ENCODE measurements at regions of chr13 and their contacts with region 1.

Region 1: GRCh38 chr13:113969973-113970611 is 3.8 kb downstream of the C13orf46 start:
- DNase-seq: no peak
- ATAC-seq: no peak
- H3K4me3 ChIP-seq: no peak overlapping the region
- H3K4me3 Mint-ChIP-seq: no peak overlapping the region
- H3K27ac ChIP-seq: no peak overlapping the region
- H3K27ac Mint-ChIP-seq: no peak overlapping the region
- H3K4me1 ChIP-seq: no peaks in the 10 kb centered on the region
- H3K4me1 Mint-ChIP-seq: no peaks in the 10 kb centered on the region
- H3K27me3 ChIP-seq: no peaks in the 10 kb centered on the region
- H3K27me3 Mint-ChIP-seq: no peaks in the 10 kb centered on the region
- CTCF ChIP-seq: no peak

Region 2: GRCh38 chr13:113208424-113209335 is 761.4 kb before region 1 on chr13 and contains the start of gene PCID2:
- CTCF ChIA-PET with region 1: no interaction called
- POLR2A ChIA-PET with region 1: no interaction called
- intact Hi-C with region 1: no loop called
- DNase-seq: peak; percentile 84 to 96 (median 90)
- ATAC-seq: peak; percentile 64
- H3K4me3 ChIP-seq: peak within 1 kb of the TSS; percentile 71
- H3K4me3 Mint-ChIP-seq: peak within 1 kb of the TSS; percentile 95
- H3K27ac ChIP-seq: peak within 1 kb of the TSS; percentile 90 to 93
- H3K27ac Mint-ChIP-seq: peak within 1 kb of the TSS; percentile 88
- H3K4me1 ChIP-seq: peaks cover 65% of the 10 kb centered on the region
- H3K4me1 Mint-ChIP-seq: peaks cover 64% of the 10 kb centered on the region
- H3K27me3 ChIP-seq: no peaks in the 10 kb centered on the region
- H3K27me3 Mint-ChIP-seq: no peaks in the 10 kb centered on the region
- CTCF ChIP-seq: no peak
- total RNA-seq, gene PCID2: 33.6 to 33.7 TPM

Region 3: GRCh38 chr13:113816946-113817859 is 152.9 kb before region 1 on chr13:
- CTCF ChIA-PET with region 1: no interaction called
- POLR2A ChIA-PET with region 1: no interaction called
- intact Hi-C with region 1: no loop called
- DNase-seq: peak; percentile 77 to 93 (median 86)
- ATAC-seq: peak; percentile 94
- H3K4me3 ChIP-seq: no peak overlapping the region
- H3K4me3 Mint-ChIP-seq: peak overlapping the region; percentile 87
- H3K27ac ChIP-seq: no peak overlapping the region
- H3K27ac Mint-ChIP-seq: peak overlapping the region; percentile 61
- H3K4me1 ChIP-seq: peaks cover 17% of the 10 kb centered on the region
- H3K4me1 Mint-ChIP-seq: peaks cover 23% of the 10 kb centered on the region
- H3K27me3 ChIP-seq: no peaks in the 10 kb centered on the region
- H3K27me3 Mint-ChIP-seq: no peaks in the 10 kb centered on the region
- CTCF ChIP-seq: peak; percentile 77

Region 4: DNA sequence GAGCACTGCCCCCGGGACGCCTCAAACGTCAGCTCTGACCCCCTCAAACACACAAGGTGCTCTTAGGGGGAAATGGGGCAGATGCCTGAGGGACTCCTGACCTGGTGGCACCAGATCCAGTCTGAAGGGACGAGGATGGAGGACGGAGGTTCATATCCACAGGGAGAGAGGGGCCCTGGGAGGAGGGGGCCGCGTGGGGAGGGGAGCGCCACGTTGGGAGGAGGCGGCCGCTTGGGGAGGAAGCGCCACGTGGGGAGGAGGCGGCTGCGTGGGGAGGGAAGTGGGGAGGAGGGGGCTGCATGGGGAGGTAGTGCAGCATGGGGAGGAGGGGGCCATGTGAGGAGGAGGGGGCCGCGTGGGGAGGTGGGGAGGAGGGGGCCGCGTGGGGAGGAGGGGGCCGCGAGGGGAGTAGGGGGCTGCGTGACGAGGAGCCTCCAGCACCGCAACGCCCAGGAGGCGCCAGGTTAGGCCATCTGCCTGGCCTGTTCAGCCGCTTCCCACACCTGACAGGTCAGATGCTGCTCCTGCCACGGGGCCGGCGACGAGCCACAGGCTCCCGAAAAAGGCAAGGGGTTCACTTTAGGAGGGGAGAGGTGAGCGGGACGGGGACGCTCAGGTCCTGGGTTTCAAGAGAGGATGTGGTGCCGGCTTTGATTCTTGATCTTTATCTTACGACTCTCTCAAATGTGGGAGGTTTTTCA is 40.5 kb after region 1 on chr13:
- CTCF ChIA-PET with region 1: no interaction called
- POLR2A ChIA-PET with region 1: interaction called, 3 read pairs
- intact Hi-C with region 1: loop called in 1 of 2 experiments (anchors 5 kb)
- DNase-seq: peak in 3 of 14 experiments; percentile 39 to 45 (median 39)
- ATAC-seq: peak; percentile 76
- H3K4me3 ChIP-seq: no peak overlapping the region
- H3K4me3 Mint-ChIP-seq: peak overlapping the region; percentile 5
- H3K27ac ChIP-seq: peak overlapping the region in 1 of 2 donors; percentile 0
- H3K27ac Mint-ChIP-seq: peak overlapping the region; percentile 69
- H3K4me1 ChIP-seq: peaks cover 7% of the 10 kb centered on the region
- H3K4me1 Mint-ChIP-seq: peaks cover 6% of the 10 kb centered on the region
- H3K27me3 ChIP-seq: no peaks in the 10 kb centered on the region
- H3K27me3 Mint-ChIP-seq: no peaks in the 10 kb centered on the region
- CTCF ChIP-seq: no peak

Region 5: DNA sequence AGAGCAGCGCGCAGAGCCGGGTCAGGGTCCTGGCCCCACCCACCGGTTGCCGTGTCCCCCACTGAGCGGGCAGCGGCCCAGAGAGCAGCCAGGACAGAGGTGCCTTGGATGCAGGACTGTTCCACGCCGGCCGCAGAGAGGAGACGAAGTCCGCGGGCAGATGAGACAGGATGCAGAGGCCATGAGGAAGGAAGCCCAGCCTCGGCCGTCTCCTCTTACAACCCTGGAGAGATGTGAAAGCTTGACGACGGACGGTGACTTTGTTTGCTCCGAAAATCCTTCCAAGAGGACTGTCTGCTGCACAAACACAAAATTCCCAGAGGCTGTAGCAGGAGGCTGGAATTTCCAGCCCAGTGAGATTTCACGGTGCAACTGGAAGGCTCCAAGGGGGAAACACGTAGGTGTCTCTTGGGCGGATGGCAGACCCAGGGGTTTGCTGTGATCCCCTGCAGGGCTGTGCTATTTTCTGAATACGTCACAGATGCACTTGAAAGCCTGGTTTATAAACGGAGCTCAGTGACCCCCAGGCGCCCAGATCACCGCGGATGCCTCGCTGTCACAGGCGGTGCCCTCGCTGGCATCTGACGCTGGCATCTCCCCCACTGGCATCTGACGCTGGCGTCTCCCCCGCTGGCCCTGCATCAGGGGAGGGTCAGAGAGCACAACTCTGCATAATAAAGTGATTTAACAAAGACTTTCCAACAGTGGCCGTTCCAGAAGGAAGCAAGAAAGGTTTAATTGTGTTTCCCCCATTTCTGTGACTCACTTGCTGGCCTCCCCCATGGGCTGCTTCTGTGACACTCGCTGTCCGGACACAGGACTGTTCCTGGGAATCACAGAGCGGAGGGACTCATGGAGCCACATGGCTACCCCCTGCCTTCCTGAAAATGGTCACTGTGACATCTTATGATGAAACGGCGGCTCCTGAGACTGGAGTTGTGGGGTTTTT is 65.8 kb after region 1 on chr13:
- CTCF ChIA-PET with region 1: no interaction called
- POLR2A ChIA-PET with region 1: no interaction called
- intact Hi-C with region 1: no loop called
- DNase-seq: peak in 2 of 14 experiments; percentile 26 to 51
- ATAC-seq: no peak
- H3K4me3 ChIP-seq: no peak overlapping the region
- H3K4me3 Mint-ChIP-seq: no peak overlapping the region
- H3K27ac ChIP-seq: no peak overlapping the region
- H3K27ac Mint-ChIP-seq: no peak overlapping the region
- H3K4me1 ChIP-seq: peaks cover 49% of the 10 kb centered on the region
- H3K4me1 Mint-ChIP-seq: peaks cover 26% of the 10 kb centered on the region
- H3K27me3 ChIP-seq: no peaks in the 10 kb centered on the region
- H3K27me3 Mint-ChIP-seq: no peaks in the 10 kb centered on the region
- CTCF ChIP-seq: no peak

Measured in CD4-positive, alpha-beta T cell (primary cell).